Panc1 (cell line): ENCODE measurements at regions of chr19 and their contacts with region 1.

Region 1: DNA sequence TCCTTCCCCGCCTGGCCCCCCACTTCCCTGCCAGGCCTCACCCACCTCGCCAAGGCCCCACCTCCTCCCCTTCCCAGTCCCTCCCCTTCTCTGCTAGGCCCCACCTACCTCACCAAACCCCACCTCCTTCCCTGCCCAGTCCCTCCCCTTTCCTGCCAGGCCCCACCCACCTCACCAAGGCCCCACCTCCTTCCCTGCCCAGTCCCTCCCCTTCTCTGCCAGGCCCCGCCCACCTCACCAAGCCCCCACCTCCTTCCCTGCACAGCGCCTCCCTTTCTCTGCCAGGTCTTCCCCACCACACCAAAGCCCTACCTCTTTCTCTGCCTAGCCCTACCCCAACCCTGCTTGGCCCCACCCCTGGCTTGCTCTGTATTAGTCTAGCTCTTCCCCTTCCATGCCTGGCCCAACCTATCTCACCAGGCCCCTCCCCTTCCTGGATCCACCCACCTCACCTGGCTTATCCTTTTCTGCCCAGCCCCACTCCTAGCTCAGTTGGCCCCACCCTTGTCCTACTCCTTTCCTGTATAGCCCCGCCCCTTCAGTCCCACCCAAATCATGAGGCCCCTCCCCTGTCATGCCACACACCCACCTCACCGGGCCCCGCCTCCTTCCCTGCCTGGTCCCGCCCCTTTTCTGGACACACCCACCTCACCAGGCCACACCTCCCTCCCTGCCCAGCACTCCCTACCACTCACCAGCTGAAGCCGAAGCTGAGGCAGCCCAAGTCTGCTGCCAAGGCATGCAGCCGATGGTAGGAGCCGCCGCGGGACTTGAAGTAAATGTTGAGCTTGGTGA is 16.2 kb downstream of the CERS1 start:
- DNase-seq: no peak
- ATAC-seq: peak; percentile 71
- H3K4me3 ChIP-seq: no peak overlapping the region
- H3K27ac ChIP-seq: no peak overlapping the region
- H3K4me1 ChIP-seq: no peaks in the 10 kb centered on the region
- H3K27me3 ChIP-seq: no peaks in the 10 kb centered on the region
- CTCF ChIP-seq: no peak

Region 2: GRCh38 chr19:18999896-19000620 is 120.3 kb after region 1 on chr19:
- CTCF ChIA-PET with region 1: interaction called, 11 read pairs
- POLR2A ChIA-PET with region 1: no interaction called
- in situ Hi-C with region 1: no loop called
- intact Hi-C with region 1: no loop called
- DNase-seq: no peak
- ATAC-seq: peak; percentile 54
- H3K4me3 ChIP-seq: no peak overlapping the region
- H3K27ac ChIP-seq: no peak overlapping the region
- H3K4me1 ChIP-seq: no peaks in the 10 kb centered on the region
- H3K27me3 ChIP-seq: no peaks in the 10 kb centered on the region
- CTCF ChIP-seq: no peak